Activated CD4-positive, alpha-beta memory T cell treated with anti-CD3 and anti-CD28 coated beads for 36 hours (primary cell): ENCODE measurements at regions of chr9 and their contacts with region 1.

Region 1: DNA sequence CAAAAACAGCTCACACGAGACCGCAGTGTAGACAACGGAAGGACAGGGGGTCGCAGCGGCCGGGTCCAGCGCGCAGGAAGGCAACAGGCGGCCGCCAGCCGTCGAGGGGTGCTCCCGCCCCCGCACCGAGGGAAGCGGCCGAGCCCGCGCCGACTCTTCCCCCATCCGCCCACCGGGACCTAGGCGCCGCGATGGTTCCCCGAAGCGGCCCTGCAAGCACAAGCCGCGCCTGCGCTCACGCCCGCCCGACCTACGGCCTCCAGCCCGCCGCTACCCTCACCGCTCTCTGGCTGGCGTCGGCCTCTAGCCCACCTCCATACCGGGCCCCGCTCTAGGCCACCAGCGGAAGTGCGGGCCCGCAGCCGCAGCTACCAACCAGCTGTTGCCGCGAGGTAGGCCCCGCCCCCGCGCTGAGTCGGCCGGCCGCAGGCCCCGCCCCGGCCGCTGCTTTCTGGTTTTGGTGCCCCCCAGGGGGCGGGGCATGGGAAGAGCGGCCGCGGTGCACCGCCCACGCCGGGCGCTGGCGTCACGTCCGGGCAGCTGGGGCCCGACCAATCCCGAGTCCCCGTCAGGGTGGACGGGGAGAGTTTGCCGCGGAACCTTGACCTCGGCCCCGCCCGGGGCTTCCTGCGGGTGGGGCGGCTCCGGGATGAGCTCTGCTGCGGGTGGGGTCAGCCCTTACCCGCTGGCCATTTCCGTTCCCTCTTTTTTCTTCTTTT is at the start of gene SETX:
- DNase-seq: peak; percentile 97
- H3K4me3 Mint-ChIP-seq: peak within 1 kb of the TSS; percentile 91
- H3K27ac Mint-ChIP-seq: peak within 1 kb of the TSS; percentile 97
- H3K4me1 Mint-ChIP-seq: peaks cover 37% of the 10 kb centered on the region
- H3K27me3 Mint-ChIP-seq: no peaks in the 10 kb centered on the region
- total RNA-seq, gene SETX: 41.6 to 42.3 TPM

Region 2: GRCh38 chr9:131393622-131394463 is 961.0 kb before region 1 on chr9 and contains the start of gene PRRC2B:
- CTCF ChIA-PET with region 1: no interaction called
- POLR2A ChIA-PET with region 1: no interaction called
- intact Hi-C with region 1: loop called (anchors 5 kb)
- DNase-seq: peak; percentile 89
- H3K4me3 Mint-ChIP-seq: peak within 1 kb of the TSS; percentile 89
- H3K27ac Mint-ChIP-seq: peak within 1 kb of the TSS; percentile 95
- H3K4me1 Mint-ChIP-seq: peaks cover 43% of the 10 kb centered on the region
- H3K27me3 Mint-ChIP-seq: no peaks in the 10 kb centered on the region
- total RNA-seq, gene PRRC2B: 127 to 135 TPM

Region 3: DNA sequence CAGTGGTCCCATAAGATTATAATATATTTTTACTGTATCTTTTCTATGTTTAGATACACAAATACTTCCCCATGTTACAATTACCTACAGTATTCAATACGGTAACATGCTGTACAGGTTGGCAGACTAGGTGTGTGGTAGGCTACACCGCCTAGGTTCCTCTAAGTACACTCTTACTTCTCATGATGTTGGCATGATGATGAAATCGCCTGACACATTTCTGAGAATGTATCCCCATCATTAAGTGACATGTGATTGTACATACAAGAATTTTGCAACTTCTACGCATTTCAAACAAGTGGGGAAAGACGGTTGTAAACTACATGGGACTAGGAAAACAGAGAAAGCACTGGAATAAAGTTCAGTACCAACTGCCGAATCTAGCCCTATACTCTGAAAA is 53.3 kb before region 1 on chr9:
- CTCF ChIA-PET with region 1: no interaction called
- POLR2A ChIA-PET with region 1: interaction called, 8 read pairs
- intact Hi-C with region 1: loop called (anchors 5 kb)
- DNase-seq: no peak
- H3K4me3 Mint-ChIP-seq: no peak overlapping the region
- H3K27ac Mint-ChIP-seq: peak overlapping the region; percentile 29
- H3K4me1 Mint-ChIP-seq: peaks cover 26% of the 10 kb centered on the region
- H3K27me3 Mint-ChIP-seq: no peaks in the 10 kb centered on the region

Region 4: GRCh38 chr9:132387133-132387532 is 32.3 kb after region 1 on chr9:
- CTCF ChIA-PET with region 1: no interaction called
- POLR2A ChIA-PET with region 1: no interaction called
- intact Hi-C with region 1: no loop called
- DNase-seq: no peak
- H3K4me3 Mint-ChIP-seq: no peak overlapping the region
- H3K27ac Mint-ChIP-seq: no peak overlapping the region
- H3K4me1 Mint-ChIP-seq: peaks cover 16% of the 10 kb centered on the region
- H3K27me3 Mint-ChIP-seq: no peaks in the 10 kb centered on the region

Region 5: GRCh38 chr9:132406554-132407122 is 51.8 kb after region 1 on chr9 and contains the start of gene TTF1:
- CTCF ChIA-PET with region 1: interaction called, 4 read pairs
- POLR2A ChIA-PET with region 1: interaction called, 6 read pairs
- intact Hi-C with region 1: loop called (anchors 1 kb)
- DNase-seq: peak; percentile 96
- H3K4me3 Mint-ChIP-seq: peak within 1 kb of the TSS; percentile 94
- H3K27ac Mint-ChIP-seq: peak within 1 kb of the TSS; percentile 90
- H3K4me1 Mint-ChIP-seq: peaks cover 54% of the 10 kb centered on the region
- H3K27me3 Mint-ChIP-seq: peaks cover 13% of the 10 kb centered on the region
- total RNA-seq, gene TTF1: 31.0 to 33.7 TPM

Region 6: GRCh38 chr9:133133681-133134418 is 779.1 kb after region 1 on chr9:
- CTCF ChIA-PET with region 1: no interaction called
- POLR2A ChIA-PET with region 1: no interaction called
- intact Hi-C with region 1: loop called (anchors 5 kb)
- DNase-seq: peak; percentile 96
- H3K4me3 Mint-ChIP-seq: peak overlapping the region; percentile 70
- H3K27ac Mint-ChIP-seq: peak overlapping the region; percentile 100
- H3K4me1 Mint-ChIP-seq: peaks cover 79% of the 10 kb centered on the region
- H3K27me3 Mint-ChIP-seq: no peaks in the 10 kb centered on the region